Sciatic nerve (tissue), 2 donors: ENCODE measurements at regions of chr1 and their contacts with region 1.

Region 1: DNA sequence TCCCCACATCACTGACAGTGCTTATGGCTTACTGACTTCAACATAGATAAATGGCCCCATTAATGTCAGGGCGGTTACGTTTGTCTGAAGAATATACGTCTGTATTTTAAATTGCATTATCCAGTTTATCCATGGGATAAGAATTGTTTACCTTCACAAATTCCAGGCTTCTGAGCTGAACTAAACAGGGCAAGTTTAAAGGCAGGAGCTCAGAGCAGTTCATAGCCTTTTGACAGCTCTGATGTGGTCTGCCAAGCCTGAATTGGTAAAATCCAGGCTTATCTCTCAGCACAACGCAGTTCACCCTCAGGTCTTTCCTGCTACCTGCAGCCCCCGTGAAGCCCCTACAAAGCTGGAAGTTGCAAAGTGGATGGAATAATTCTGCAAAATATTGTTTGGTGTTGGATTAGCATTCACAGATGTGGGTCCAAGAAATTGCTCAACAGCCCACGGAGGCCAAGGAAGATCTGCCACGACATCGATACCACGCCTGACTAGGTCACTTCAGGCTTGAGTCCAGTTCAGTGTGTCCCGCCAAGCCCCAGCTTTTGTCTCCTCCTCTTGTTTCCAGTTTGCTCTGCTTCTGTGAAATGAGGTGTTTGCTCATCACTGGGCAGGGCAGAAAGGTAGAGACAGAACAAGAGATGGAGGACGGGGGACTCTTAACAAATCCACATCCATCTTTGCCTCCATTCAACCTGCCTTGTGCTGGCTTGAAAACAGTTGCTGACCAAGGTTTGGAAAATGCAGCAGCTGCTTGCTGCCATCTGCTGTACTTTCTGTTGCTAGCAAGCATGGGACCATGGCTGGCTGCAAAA is 79.8 kb upstream of the GREM2 start:
- DNase-seq: peak; percentile 63
- ATAC-seq: peak; percentile 88

Region 2: DNA sequence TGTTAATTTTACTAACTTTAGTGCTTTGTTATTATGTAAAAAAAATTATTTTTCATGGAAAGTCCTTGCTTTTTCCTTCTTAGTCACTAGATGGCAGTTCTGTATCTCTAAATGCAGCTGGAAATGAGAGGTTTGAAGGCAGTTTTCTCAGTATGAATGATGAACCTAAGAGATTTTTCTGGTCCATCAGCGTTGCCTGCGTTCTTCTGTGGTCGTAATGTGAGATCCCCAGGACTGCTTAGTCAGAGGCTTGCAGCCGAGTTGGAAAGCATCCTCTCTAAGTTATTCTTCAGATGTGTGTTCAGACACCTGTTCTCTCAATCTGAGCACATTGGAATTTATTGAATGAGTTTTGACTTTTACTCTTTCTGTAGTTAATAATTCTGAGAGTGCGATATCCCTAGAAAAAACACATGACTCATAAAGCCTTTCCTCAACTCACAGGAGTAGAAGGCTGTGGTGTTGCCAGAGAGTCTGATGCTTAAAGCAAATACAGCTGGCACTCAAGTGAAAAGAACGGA is 500.8 kb before region 1 on chr1:
- intact Hi-C with region 1: loop called (anchors 5 kb)
- DNase-seq: no peak
- ATAC-seq: peak; percentile 88